Gastrocnemius medialis (tissue), 4 donors: ENCODE measurements at regions of chr12 and their contacts with region 1.

Region 1: DNA sequence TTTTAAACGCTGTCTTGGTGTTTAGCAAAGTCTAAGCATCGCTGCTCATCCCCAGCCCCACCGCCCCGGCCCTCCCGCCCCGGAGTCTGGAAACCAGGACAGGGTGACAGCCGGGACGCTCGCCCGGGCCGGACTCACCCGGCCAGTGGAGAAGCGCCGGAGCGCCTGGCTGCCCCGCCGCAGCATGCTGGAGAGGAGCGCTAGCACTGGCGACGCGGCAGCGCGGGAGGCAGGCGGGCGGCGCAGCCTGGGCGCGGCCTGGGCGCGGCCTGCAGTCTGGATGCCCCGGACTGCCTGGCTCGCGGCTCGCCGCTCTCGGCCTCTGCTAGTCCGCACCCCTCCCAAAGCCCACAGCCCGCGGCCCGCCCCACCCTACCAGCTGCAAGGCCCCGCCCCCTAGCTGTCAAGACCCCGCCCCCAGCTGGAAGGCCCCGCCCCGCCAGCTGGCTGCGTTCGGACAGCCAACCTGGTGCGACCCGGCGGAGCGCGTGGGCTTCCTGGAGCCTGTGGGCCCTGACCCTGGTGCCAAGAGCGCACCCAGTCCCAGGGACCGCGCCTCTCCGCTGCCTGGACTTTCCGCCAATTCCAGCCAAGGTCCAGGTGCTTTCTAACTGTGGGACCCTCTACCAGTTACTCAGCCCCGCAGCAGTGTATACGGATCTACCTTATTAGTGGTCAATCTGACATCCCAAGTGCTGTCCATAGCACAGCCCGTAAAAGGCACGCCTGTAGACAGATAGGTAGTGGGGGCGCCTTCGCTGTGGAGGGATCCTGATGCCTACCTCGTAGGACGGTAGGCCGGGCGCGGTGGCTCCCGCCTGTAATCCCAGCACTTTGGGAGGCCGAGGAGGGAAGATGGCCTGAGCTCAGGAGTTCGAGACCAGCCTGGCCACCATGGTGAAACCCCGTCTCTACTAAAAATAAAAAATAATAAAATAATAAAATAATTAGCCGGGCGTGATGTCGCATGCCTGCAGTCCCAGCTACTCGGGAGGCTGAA is at the start of gene ALDH1L2:
- DNase-seq: peak; percentile 64 to 73
- ATAC-seq: peak; percentile 83 to 84
- H3K4me3 ChIP-seq: peak within 1 kb of the TSS; percentile 42 to 70 (median 60)
- H3K27ac ChIP-seq: peak within 1 kb of the TSS; percentile 3 to 47 (median 26)
- H3K4me1 ChIP-seq: peaks cover 8 to 11% of the 10 kb centered on the region in 2 donors
- H3K27me3 ChIP-seq: no peaks in the 10 kb centered on the region
- CTCF ChIP-seq: no peak
- POLR2A ChIP-seq: no peak
- total RNA-seq, gene ALDH1L2: 0.95 to 4.0 (median 1.7) TPM

Region 2: GRCh38 chr12:105041186-105041585 is 43.4 kb before region 1 on chr12:
- in situ Hi-C with region 1: no loop called
- intact Hi-C with region 1: no loop called
- DNase-seq: no peak
- ATAC-seq: no peak
- H3K4me3 ChIP-seq: no peak overlapping the region
- H3K27ac ChIP-seq: no peak overlapping the region
- H3K4me1 ChIP-seq: no peaks in the 10 kb centered on the region
- H3K27me3 ChIP-seq: no peaks in the 10 kb centered on the region
- CTCF ChIP-seq: no peak
- POLR2A ChIP-seq: no peak

Region 3: GRCh38 chr12:105107494-105108371 is 23.2 kb after region 1 on chr12 and contains the start of gene WASHC4:
- in situ Hi-C with region 1: no loop called
- intact Hi-C with region 1: loop called (anchors 1 kb)
- DNase-seq: peak; percentile 90
- ATAC-seq: peak; percentile 94 to 96
- H3K4me3 ChIP-seq: peak within 1 kb of the TSS; percentile 91 to 95 (median 93)
- H3K27ac ChIP-seq: peak within 1 kb of the TSS; percentile 92 to 98 (median 96)
- H3K4me1 ChIP-seq: peaks cover 30 to 32% of the 10 kb centered on the region in 2 donors
- H3K27me3 ChIP-seq: no peaks in the 10 kb centered on the region
- CTCF ChIP-seq: peak in 1 of 5 experiments; percentile 16
- POLR2A ChIP-seq: peak; percentile 96 to 97
- total RNA-seq, gene WASHC4: 23.6 to 53.2 (median 36.7) TPM